ENCODE measurements at regions of chr12 and their contacts with region 1.

Region 1: DNA sequence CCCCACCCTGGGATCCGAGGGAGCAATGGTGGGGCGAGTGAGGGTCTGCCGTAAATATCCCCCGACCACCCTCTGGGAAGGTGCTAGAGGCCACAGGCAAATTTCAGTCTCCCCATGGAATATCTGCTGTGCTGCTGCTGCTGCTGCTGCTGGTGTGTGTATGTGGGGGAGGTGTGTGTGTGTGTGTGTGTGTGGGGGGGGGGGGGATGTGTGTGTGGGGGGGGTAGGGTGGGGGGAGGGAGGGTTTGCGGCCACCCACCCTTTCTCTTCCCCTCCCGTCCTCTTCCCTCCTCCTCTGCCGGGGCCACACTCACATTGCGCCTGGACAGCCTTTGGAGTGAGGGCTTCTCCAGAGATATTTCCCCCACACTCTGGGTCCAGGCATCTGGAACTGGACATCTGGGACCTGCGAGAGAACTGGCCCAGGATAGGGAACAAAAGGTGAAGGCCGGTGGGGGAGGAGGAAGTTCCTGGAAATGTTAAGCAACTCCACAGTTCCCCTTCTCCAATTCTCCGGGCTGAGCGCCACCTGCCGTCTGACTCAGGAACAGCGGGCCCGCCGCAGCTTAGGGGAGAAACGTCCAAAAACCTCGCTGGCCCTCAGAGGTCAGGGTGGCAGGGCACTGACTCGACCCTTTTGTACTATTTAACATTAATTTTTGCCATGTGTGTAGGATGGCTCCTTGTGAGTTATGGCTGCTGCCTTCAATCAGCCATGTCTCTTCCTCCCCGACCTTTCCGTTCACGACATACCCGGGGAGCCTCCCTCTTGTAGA is at the start of gene C1RL:
- DNase-seq: peak; percentile 66 to 75 (median 73)
- H3K4me3 ChIP-seq: peak within 1 kb of the TSS; percentile 64 to 96 (median 81)
- H3K27ac ChIP-seq: peak within 1 kb of the TSS; percentile 86 to 89
- H3K4me1 ChIP-seq: peaks cover 0 to 25% (median 21%) of the 10 kb centered on the region in 4 experiments
- H3K27me3 ChIP-seq: no peaks in the 10 kb centered on the region

Region 2: DNA sequence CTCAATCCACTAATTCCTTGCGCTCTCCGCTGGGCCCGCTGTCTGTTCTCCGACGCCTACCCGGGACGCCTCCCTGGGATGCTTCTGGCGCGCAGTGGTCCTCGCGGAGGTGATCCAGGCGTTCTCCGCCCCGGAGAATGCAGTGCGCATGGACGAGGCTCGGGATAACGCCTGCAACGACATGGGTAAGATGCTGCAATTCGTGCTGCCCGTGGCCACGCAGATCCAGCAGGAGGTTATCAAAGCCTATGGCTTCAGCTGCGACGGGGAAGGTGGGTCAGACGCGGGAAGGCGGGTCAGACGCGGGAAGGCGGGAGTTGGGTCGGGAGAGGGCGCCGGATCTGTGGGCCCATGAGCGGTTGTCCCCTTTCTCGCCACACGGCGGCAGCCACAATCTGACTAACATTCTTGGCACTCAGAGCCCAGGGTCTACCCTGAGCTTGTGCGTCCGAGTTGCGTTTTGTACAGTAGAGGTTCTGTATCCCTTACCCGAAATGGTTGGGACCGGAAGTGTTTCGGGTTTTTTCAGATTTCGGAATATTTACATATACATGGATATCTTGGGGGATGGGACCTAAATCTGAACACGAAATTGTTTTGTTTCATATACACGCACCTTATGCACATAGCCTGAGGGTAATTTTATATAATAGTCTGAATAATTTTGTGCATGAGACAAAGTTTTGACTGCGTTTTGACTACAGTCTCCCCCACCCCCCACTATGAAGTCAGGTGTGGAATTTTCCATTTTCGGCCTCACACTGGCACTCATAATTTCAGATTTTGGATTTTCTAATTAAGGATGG is 164.4 kb before region 1 on chr12:
- CTCF ChIA-PET with region 1: interaction called, 30 read pairs
- POLR2A ChIA-PET with region 1: interaction called, 13 read pairs
- DNase-seq: peak; percentile 90 to 94 (median 93)
- H3K4me3 ChIP-seq: peak overlapping the region; percentile 41 to 89 (median 71)
- H3K27ac ChIP-seq: peak overlapping the region; percentile 97 to 99
- H3K4me1 ChIP-seq: peaks cover 3 to 53% (median 48%) of the 10 kb centered on the region in 4 experiments
- H3K27me3 ChIP-seq: no peaks in the 10 kb centered on the region

Region 3: DNA sequence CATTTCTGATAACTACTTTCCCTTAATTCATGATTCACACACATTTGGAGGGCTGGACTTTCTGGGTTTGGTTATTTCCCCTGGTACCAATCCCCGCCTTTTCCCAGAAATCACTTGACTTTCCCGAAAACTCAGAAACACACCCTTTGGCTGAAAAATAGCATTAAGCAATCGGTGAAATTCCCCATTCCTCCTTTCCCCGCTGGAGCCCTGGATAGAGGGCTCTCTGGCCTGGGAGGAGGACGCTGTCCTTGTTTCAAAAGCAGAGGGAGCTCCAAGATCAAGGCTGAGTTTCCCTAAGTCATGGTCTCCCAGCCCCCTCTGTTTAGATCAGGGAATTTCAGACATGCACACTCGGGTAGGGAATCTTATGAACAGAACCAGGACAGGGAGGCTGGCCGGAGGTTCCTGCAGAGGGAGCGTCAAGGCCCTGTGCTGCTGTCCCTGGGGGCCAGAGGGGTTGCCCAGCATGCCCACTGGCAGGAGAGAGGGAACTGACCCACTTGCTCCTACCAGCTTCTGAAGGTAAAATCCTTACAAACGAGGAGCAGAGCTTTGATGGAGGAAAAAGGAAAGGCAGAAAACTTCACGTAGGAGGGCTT is 48.5 kb before region 1 on chr12 and contains the start of gene C1S:
- CTCF ChIA-PET with region 1: interaction called, 55 read pairs
- POLR2A ChIA-PET with region 1: no interaction called
- DNase-seq: peak in 2 of 3 donors; percentile 34 to 43
- H3K4me3 ChIP-seq: no peak within 1 kb of the TSS
- H3K27ac ChIP-seq: no peak within 1 kb of the TSS
- H3K4me1 ChIP-seq: peaks cover 0 to 20% (median 6%) of the 10 kb centered on the region in 4 experiments
- H3K27me3 ChIP-seq: no peaks in the 10 kb centered on the region

Region 4: DNA sequence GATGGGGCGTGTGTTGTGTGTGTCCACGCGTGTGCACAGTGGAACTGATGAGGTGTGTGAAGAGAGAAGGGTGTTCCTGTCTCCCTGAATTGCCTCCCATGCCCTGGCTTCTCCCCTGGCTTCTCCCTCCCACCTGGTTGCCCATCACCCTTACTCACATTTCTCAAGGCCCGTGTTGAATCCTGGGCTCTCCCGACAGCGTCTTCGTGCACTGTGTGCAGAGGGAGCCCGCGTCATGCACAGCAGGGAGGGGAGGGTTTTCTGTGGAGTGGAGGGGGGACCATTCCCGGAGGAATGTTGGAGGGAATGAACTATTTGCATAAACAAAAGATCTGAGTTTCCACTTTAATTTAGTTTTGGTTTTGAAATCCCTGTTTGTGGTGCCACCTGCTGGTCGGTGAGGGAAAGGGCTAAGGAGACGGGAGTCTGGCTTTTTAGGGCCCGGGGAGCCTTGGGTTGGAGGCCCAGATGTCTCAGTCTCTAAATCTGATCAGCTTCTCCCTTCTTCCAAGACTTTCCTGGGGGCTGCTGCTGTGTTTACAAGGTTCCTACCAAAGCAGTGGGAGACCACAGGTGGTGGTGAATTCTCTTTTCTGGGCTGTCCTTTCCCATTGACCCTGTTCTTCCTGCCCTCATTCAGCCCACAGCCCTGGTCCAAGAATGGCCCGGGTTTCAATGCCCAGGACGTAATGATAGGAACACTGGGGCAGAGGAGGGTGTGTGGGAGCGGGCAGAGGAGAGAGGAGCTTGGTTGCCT is 16.6 kb before region 1 on chr12 and contains the start of gene C1R:
- CTCF ChIA-PET with region 1: interaction called, 55 read pairs
- POLR2A ChIA-PET with region 1: no interaction called
- DNase-seq: peak; percentile 61 to 78 (median 68)
- H3K4me3 ChIP-seq: peak within 1 kb of the TSS; percentile 19 to 89 (median 65)
- H3K27ac ChIP-seq: no peak within 1 kb of the TSS
- H3K4me1 ChIP-seq: peaks cover 0 to 12% (median 5%) of the 10 kb centered on the region in 4 experiments
- H3K27me3 ChIP-seq: no peaks in the 10 kb centered on the region

Region 5: GRCh38 chr12:7122811-7123769 is 14.1 kb after region 1 on chr12:
- CTCF ChIA-PET with region 1: interaction called, 27 read pairs
- POLR2A ChIA-PET with region 1: no interaction called
- DNase-seq: no peak
- H3K4me3 ChIP-seq: no peak overlapping the region
- H3K27ac ChIP-seq: no peak overlapping the region
- H3K4me1 ChIP-seq: peaks cover 0 to 20% (median 10%) of the 10 kb centered on the region in 4 experiments
- H3K27me3 ChIP-seq: no peaks in the 10 kb centered on the region

Region 6: DNA sequence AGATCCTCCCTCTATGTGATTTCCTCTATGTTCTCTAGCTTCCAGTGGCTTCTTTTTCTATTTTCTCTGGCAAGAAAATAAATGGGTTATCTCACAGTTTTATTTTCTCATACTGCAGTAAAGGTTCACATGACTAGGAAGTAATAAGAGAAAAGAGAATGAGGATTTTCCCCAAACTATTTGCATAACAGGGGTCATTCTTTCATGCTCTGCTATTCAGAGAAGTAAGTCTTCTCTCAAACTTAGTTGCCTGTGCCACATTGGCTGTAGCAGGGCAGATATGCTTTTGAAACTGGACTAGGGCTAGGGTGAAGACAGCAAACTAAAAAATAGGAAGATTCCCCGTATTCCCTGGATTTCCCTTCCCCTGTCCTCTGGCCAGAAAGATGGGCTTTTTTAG is 252.3 kb after region 1 on chr12:
- CTCF ChIA-PET with region 1: no interaction called
- POLR2A ChIA-PET with region 1: no interaction called
- DNase-seq: no peak
- H3K4me3 ChIP-seq: no peak overlapping the region
- H3K27ac ChIP-seq: no peak overlapping the region
- H3K4me1 ChIP-seq: no peaks in the 10 kb centered on the region
- H3K27me3 ChIP-seq: no peaks in the 10 kb centered on the region

Measured in common myeloid progenitor, CD34-positive (primary cell).